Heart right ventricle (tissue), 16 donors: ENCODE measurements at regions of chr3 and their contacts with region 1.

Region 1: DNA sequence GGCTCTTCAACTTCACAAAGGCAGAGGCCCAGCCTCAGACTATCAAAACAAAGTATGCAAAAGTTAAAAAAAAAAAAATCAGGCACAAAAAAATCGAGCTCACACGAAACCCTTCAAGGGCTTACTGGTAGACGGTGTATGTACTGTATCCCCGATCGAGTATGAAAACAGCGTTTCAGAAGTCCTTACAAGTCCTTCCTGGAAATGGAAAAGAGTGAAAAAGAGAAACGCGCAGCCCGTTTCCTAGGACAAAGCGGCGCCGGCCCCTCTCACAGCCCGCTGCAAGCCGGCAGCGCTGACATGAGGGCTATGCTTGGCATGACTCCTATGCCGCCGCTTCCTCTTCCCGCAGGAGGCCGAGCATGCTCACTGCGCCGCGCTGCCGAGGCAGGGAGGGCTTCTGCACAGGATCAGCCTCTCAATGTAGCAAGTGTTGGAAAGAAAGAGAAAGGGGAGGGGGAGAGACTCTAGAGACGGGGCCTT is at the start of gene VGLL4:
- DNase-seq: peak; percentile 89
- ATAC-seq: peak; percentile 87 to 93 (median 90)
- H3K4me3 ChIP-seq: peak within 1 kb of the TSS; percentile 55 to 86 (median 76)
- H3K27ac ChIP-seq: peak within 1 kb of the TSS; percentile 88 to 98 (median 96)
- H3K4me1 ChIP-seq: peaks cover 18 to 39% (median 36%) of the 10 kb centered on the region in 9 donors
- H3K27me3 ChIP-seq: no peaks in the 10 kb centered on the region
- CTCF ChIP-seq: peak in 4 of 9 donors; percentile 22 to 42 (median 36)
- total RNA-seq, gene VGLL4: 20.8 to 46.1 (median 30.3) TPM

Region 2: DNA sequence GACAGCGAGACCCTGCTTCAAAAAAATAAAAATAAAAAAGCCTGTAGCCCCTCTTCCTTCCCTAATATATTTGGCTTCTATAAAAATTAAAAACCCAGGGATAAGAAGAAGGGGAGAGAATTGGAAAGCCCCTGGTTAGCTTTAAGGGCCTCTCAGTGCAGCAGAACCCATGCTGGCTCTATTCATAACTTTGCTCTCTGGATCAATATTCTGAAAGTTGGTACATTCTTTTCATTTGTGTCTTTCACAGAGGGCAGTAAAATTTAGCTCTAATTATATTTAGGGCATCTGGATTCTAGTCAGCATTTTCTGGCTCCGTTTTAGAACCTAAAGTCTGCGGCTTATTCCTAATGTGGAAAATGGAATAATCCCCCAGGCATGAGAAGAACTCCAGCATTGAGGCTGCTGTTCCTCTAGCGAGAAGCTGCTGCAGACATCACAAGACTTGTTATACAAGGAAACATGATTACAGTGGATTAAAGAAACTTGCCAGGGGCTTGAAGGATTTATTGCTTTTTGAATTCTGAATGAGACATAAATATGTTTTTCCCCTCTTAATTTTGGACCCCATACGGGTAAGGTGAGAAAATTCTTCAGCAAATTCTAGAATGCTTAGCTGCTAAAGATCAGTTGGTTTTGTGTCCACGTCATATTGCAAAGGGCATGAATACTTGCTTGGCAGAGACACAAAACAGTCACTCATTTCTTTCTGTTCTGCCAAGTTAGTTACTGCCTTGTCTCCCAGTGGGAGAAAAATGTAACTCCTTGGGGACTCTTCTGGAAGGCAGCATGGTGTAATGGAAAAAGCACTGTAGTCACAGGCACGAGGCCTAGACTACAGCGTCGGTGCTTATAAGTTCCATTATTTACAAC is 177.7 kb before region 1 on chr3:
- intact Hi-C with region 1: loop called in 4 of 10 experiments (anchors 2 to 10 kb)
- DNase-seq: peak in 1 of 2 donors; percentile 83
- ATAC-seq: peak; percentile 88 to 95 (median 92)
- H3K4me3 ChIP-seq: no peak overlapping the region
- H3K27ac ChIP-seq: peak overlapping the region; percentile 52 to 95 (median 86)
- H3K4me1 ChIP-seq: peaks cover 2 to 35% (median 28%) of the 10 kb centered on the region in 9 donors
- H3K27me3 ChIP-seq: no peaks in the 10 kb centered on the region
- CTCF ChIP-seq: no peak

Region 3: DNA sequence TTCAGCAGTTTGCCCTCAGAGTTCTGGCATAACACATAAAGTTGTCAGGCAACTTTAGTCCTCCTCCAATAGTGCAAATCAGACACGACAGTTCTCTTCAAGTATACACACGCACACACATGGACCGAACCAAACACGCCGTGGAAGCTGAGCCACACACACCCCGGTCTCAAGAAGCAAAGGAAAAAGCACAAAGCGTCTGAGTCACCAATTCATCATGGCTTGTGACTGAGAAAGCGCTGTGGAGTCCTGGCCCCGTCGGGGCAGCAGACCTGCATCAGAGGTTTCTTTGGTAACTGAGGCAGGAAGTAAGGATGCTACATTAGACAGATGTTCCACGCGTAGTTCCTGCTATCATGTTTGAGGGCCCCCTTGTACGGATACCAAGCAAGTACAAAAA is 85.6 kb before region 1 on chr3:
- intact Hi-C with region 1: loop called in 4 of 10 experiments (anchors 5 to 10 kb)
- DNase-seq: no peak
- ATAC-seq: no peak
- H3K4me3 ChIP-seq: no peak overlapping the region
- H3K27ac ChIP-seq: peak overlapping the region in 7 of 10 donors; percentile 31 to 82 (median 51)
- H3K4me1 ChIP-seq: peaks cover 58 to 99% (median 90%) of the 10 kb centered on the region in 9 donors
- H3K27me3 ChIP-seq: no peaks in the 10 kb centered on the region
- CTCF ChIP-seq: no peak

Region 4: GRCh38 chr3:11582191-11582968 is 61.3 kb before region 1 on chr3:
- intact Hi-C with region 1: loop called in 3 of 10 experiments (anchors 5 to 10 kb)
- DNase-seq: peak; percentile 60 to 82
- ATAC-seq: peak; percentile 80 to 92 (median 86)
- H3K4me3 ChIP-seq: peak overlapping the region in 9 of 10 donors; percentile 6 to 51 (median 46)
- H3K27ac ChIP-seq: peak overlapping the region; percentile 5 to 85 (median 71)
- H3K4me1 ChIP-seq: peaks cover 11 to 92% (median 53%) of the 10 kb centered on the region in 9 donors
- H3K27me3 ChIP-seq: no peaks in the 10 kb centered on the region
- CTCF ChIP-seq: no peak

Region 5: DNA sequence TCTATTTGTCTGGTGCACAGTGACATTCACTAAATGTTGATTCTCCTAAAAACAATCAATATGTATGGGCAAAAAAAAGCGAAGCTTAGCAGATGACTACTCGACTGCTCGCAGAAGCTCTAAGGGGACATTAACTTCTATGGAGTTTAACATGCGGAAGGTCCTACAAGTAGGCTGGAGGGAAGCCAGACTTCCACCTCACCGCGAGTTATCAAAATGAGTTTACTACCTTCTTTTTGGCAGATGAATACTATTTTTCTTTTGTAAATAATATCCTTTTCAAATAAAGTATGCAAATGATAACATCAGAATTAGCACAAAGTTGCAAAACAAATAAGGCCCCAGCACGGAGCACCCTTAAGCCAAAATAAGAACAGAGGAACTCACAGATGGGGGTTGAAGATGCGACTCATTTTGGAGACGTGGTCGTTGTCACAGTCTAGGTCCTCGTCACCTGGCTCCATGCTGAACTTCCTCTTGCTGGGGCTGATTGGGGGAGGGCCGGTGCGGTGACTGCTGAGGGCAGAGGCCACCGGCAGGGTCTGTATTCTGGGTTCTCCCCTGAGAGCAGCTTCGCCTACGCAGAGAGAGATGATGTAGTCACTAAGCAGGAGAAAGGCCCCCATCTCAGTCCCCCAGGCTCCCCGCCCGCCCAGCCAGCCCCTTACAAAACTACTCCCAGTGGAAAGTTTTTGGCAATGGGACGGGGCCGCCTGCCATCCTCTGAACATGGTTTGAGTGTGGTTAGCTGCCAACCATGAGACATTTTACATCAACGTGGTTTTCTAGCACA is 42.0 kb before region 1 on chr3:
- intact Hi-C with region 1: loop called in 6 of 10 experiments (anchors 5 kb)
- DNase-seq: peak; percentile 67 to 75
- ATAC-seq: peak; percentile 15 to 66 (median 50)
- H3K4me3 ChIP-seq: peak overlapping the region in 1 of 10 donors; percentile 3
- H3K27ac ChIP-seq: peak overlapping the region; percentile 58 to 90 (median 83)
- H3K4me1 ChIP-seq: peaks cover 10 to 92% (median 74%) of the 10 kb centered on the region in 9 donors
- H3K27me3 ChIP-seq: no peaks in the 10 kb centered on the region
- CTCF ChIP-seq: no peak